ENCODE measurements at regions of chr1 and their contacts with region 1.

Region 1: DNA sequence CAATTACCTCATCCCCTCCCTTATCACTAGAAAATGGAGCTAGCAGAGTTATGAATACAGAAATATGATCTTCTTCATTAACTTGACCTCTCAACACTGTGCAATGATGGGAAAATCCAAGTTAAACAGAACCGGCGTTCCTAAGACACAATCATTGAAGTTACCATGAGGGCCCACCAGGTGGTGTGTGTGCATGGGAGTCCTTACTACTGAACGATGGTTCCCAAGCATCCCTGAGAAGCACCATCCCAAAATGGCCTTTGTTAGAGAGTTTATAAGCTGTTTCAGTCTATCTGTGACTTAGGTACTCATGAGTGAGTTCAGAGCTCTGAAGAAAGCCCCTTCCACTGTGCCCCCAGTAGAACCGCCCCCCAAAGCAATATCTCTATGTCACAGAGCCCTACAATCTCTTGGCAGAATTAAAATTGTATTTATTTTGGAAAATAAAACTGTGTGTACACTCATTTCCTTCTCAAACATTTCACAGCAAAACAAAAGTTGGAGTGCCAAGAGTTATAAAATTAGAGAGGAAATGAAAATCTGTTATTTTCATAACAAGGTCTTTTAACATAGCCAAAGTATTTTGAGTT is 56.8 kb downstream of the PLD5 start:
- DNase-seq: peak; percentile 76
- H3K4me3 ChIP-seq: no peak overlapping the region
- H3K27ac ChIP-seq: no peak overlapping the region
- H3K4me1 ChIP-seq: peaks cover 13% of the 10 kb centered on the region
- H3K27me3 ChIP-seq: no peaks in the 10 kb centered on the region
- CTCF ChIP-seq: peak; percentile 64

Region 2: DNA sequence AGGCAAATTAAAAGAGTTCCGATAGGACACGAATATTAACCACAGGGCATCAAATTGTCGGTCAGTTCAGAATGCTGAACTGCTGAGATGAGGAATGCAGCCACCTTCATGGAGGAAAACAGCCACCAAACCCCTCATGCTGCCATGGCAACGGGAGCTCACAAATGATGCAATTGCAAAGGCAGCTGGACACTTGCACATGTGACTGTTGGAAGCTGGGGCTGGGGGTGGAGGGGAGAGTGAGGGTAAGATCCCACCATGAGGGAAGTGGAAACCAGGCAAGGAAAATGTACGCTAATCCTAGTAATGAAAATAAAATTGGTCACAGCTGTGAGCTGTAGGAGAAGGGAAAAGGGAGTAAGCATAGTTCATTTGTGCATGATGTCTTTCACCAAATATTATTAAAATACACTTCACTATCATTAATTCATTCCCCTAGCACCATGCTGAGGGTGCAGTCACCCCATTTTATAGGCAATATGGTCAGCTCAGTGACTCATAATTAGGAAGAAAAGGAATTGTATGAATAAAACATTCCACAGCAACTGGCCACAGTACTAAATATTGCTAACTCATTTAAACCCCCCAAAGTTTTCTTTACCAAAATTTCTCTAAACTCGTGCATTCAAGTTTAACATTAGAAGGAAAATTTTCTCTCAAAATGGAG is 494.8 kb before region 1 on chr1:
- CTCF ChIA-PET with region 1: no interaction called
- POLR2A ChIA-PET with region 1: interaction called, 20 read pairs
- intact Hi-C with region 1: no loop called
- DNase-seq: no peak
- H3K4me3 ChIP-seq: no peak overlapping the region
- H3K27ac ChIP-seq: no peak overlapping the region
- H3K4me1 ChIP-seq: no peaks in the 10 kb centered on the region
- H3K27me3 ChIP-seq: no peaks in the 10 kb centered on the region
- CTCF ChIP-seq: no peak

Region 3: GRCh38 chr1:242797856-242798255 is 330.2 kb after region 1 on chr1:
- CTCF ChIA-PET with region 1: no interaction called
- POLR2A ChIA-PET with region 1: no interaction called
- intact Hi-C with region 1: loop called (anchors 10 kb)
- DNase-seq: no peak
- H3K4me3 ChIP-seq: no peak overlapping the region
- H3K27ac ChIP-seq: no peak overlapping the region
- H3K4me1 ChIP-seq: no peaks in the 10 kb centered on the region
- H3K27me3 ChIP-seq: no peaks in the 10 kb centered on the region
- CTCF ChIP-seq: no peak

Region 4: GRCh38 chr1:243325305-243325890 is 857.7 kb after region 1 on chr1:
- CTCF ChIA-PET with region 1: no interaction called
- POLR2A ChIA-PET with region 1: no interaction called
- intact Hi-C with region 1: loop called (anchors 5 kb)
- DNase-seq: peak; percentile 49
- H3K4me3 ChIP-seq: no peak overlapping the region
- H3K27ac ChIP-seq: no peak overlapping the region
- H3K4me1 ChIP-seq: no peaks in the 10 kb centered on the region
- H3K27me3 ChIP-seq: no peaks in the 10 kb centered on the region
- CTCF ChIP-seq: peak; percentile 62